ENCODE measurements at regions of chr3 and their contacts with region 1.

Region 1: GRCh38 chr3:32703491-32703972 is 18.5 kb downstream of the CNOT10 start:
- DNase-seq: no peak
- H3K4me3 ChIP-seq: no peak overlapping the region
- H3K27ac ChIP-seq: no peak overlapping the region
- H3K4me1 ChIP-seq: peaks cover 26% of the 10 kb centered on the region
- CTCF ChIP-seq: no peak

Region 2: GRCh38 chr3:32354362-32354778 is 349.2 kb before region 1 on chr3:
- CTCF ChIA-PET with region 1: no interaction called
- POLR2A ChIA-PET with region 1: interaction called, 10 read pairs
- intact Hi-C with region 1: no loop called
- DNase-seq: no peak
- H3K4me3 ChIP-seq: no peak overlapping the region
- H3K27ac ChIP-seq: no peak overlapping the region
- H3K4me1 ChIP-seq: no peaks in the 10 kb centered on the region
- CTCF ChIP-seq: no peak

Region 3: DNA sequence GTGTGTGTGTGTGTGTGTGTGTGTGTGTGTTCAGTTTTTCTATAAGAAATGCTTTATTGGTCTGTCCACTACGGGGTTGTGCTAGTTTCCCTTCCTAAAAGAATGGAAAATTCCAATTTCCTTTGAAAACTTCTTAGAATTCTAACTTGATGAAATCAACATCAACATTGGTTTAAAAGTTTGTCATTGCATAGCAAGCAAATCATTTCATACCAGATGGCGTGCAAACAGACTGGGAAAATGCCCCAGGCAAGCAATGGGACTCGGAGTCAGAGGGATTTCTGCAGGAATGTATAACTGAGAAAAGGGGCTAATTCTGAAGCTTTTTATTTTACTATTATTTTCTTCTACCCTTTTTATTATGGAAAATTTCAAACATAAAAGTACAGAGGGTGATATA is 119.8 kb before region 1 on chr3:
- CTCF ChIA-PET with region 1: no interaction called
- POLR2A ChIA-PET with region 1: no interaction called
- intact Hi-C with region 1: no loop called
- DNase-seq: no peak
- H3K4me3 ChIP-seq: no peak overlapping the region
- H3K27ac ChIP-seq: no peak overlapping the region
- H3K4me1 ChIP-seq: no peaks in the 10 kb centered on the region
- CTCF ChIP-seq: no peak

Region 4: GRCh38 chr3:32630266-32630665 is 73.3 kb before region 1 on chr3:
- CTCF ChIA-PET with region 1: no interaction called
- POLR2A ChIA-PET with region 1: no interaction called
- intact Hi-C with region 1: no loop called
- DNase-seq: no peak
- H3K4me3 ChIP-seq: no peak overlapping the region
- H3K27ac ChIP-seq: no peak overlapping the region
- H3K4me1 ChIP-seq: no peaks in the 10 kb centered on the region
- CTCF ChIP-seq: no peak

Region 5: GRCh38 chr3:32778389-32778788 is 74.9 kb after region 1 on chr3:
- CTCF ChIA-PET with region 1: no interaction called
- POLR2A ChIA-PET with region 1: no interaction called
- intact Hi-C with region 1: no loop called
- DNase-seq: no peak
- H3K4me3 ChIP-seq: no peak overlapping the region
- H3K27ac ChIP-seq: no peak overlapping the region
- H3K4me1 ChIP-seq: no peaks in the 10 kb centered on the region
- CTCF ChIP-seq: 0 out of 2 replicates have a peak, but pooled peaks have one; percentile 26

Region 6: DNA sequence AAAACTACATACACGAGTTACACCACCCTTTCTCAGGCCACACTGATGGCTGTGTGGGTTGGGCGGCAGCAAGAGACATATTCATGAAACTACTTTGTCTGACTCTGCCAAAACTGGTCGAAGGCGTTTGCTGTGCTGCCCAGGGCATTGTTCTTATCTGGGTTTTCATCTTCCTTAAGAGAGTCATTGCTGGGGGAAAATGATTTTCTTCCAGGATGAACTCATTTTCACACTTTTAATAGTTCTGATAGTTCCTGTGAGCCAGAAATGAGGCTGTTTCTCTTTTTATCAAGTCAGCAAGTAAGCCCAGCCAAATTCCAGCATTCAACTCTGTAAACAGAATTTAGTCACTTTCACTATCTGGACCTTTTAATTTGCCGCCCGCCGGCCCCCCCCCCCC is 161.9 kb after region 1 on chr3:
- CTCF ChIA-PET with region 1: no interaction called
- POLR2A ChIA-PET with region 1: no interaction called
- intact Hi-C with region 1: no loop called
- DNase-seq: no peak
- H3K4me3 ChIP-seq: no peak overlapping the region
- H3K27ac ChIP-seq: no peak overlapping the region
- H3K4me1 ChIP-seq: no peaks in the 10 kb centered on the region
- CTCF ChIP-seq: no peak

Measured in OCI-LY7 (cell line).